Mammary epithelial cell (primary cell): ENCODE measurements at regions of chr1 and their contacts with region 1.

Region 1: GRCh38 chr1:51264451-51264850 is 28.4 kb downstream of the RNF11 start:
- DNase-seq: peak; percentile 62
- H3K4me3 ChIP-seq: no peak overlapping the region
- H3K27ac ChIP-seq: peak overlapping the region; percentile 1
- H3K4me1 ChIP-seq: peaks cover 67% of the 10 kb centered on the region
- H3K27me3 ChIP-seq: no peaks in the 10 kb centered on the region
- CTCF ChIP-seq: no peak

Region 2: GRCh38 chr1:51235673-51236530 is 28.5 kb before region 1 on chr1 and contains the start of gene RNF11:
- CTCF ChIA-PET with region 1: no interaction called
- dilution Hi-C with region 1: no loop called
- in situ Hi-C with region 1: no loop called
- intact Hi-C with region 1: loop called (anchors 2 kb)
- DNase-seq: peak; percentile 91
- H3K4me3 ChIP-seq: peak within 1 kb of the TSS; percentile 79 to 97 (median 88)
- H3K27ac ChIP-seq: peak within 1 kb of the TSS; percentile 89
- H3K4me1 ChIP-seq: peaks cover 16% of the 10 kb centered on the region
- H3K27me3 ChIP-seq: no peaks in the 10 kb centered on the region
- CTCF ChIP-seq: no peak
- total RNA-seq, gene RNF11: 82.7 to 92.0 TPM